H1 (cell line): ENCODE measurements at regions of chr20 and their contacts with region 1.

Region 1: DNA sequence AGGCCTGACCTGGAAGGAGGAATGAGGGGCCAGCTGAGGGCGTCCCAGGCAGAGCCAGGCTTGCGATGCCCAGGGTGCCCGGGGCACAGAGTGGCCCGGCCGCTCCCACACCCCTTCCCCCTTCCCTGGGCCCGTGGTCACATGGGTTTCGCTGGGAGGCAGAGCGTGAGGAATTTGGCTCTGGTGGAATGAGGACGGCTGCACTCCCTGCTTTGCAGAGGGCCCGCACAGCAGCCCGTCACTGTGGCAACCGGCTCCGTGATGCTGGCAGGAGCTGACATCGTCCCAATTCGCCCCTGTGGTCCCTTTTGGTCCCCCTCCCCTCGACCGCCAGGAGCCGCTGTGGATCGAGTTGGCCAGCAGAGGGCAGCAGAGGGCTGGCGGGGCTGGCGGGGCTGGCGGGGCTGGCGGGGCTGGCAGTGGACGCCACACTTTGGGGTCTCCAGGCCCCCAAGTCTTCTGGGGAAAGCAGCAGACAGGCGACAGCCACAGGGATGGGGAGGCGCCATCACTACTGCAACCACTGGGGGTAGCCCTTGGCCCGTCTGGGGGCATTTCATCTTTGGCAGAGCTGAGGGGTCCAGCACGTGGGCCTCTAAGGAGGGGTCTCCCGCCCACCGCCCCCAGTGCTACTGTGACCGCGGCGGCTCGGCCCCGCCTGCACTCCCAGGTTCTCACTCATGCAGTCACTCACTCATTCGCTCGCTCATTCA is 49.6 kb upstream of the BHLHE23 start:
- DNase-seq: peak in 1 of 2 experiments; percentile 93
- H3K4me3 ChIP-seq: peak overlapping the region in 1 of 4 experiments; percentile 41; a peak in 1 of 8 replicates
- H3K27ac ChIP-seq: no peak overlapping the region
- H3K4me1 ChIP-seq: peaks cover 0 to 2% (median 0%) of the 10 kb centered on the region in 4 experiments; a peak in 2 of 7 replicates
- H3K27me3 ChIP-seq: no peaks in the 10 kb centered on the region; a peak in 2 of 7 replicates
- CTCF ChIP-seq: peak; percentile 67 to 94 (median 74)
- EP300 ChIP-seq: no peak
- POLR2A ChIP-seq: no peak
- RAD21 ChIP-seq: peak; percentile 70 to 85

Region 2: GRCh38 chr20:62815066-62815991 is 241.1 kb before region 1 on chr20:
- CTCF ChIA-PET with region 1: no interaction called
- POLR2A ChIA-PET with region 1: no interaction called
- DNase-seq: peak; percentile 54 to 73
- H3K4me3 ChIP-seq: peak overlapping the region; percentile 54 to 71 (median 63)
- H3K27ac ChIP-seq: no peak overlapping the region; the same call in 1 of the 2 replicates
- H3K4me1 ChIP-seq: peaks cover 0 to 17% (median 11%) of the 10 kb centered on the region in 4 experiments; a peak in 5 of 7 replicates
- H3K27me3 ChIP-seq: peaks cover 0 to 8% (median 2%) of the 10 kb centered on the region in 4 experiments; a peak in 2 of 7 replicates
- CTCF ChIP-seq: no peak
- EP300 ChIP-seq: no peak
- POLR2A ChIP-seq: no peak
- RAD21 ChIP-seq: no peak

Region 3: GRCh38 chr20:62986257-62986800 is 70.1 kb before region 1 on chr20:
- CTCF ChIA-PET with region 1: no interaction called
- POLR2A ChIA-PET with region 1: no interaction called
- DNase-seq: no peak
- H3K4me3 ChIP-seq: no peak overlapping the region
- H3K27ac ChIP-seq: no peak overlapping the region
- H3K4me1 ChIP-seq: peaks cover 0 to 19% (median 7%) of the 10 kb centered on the region in 4 experiments; a peak in 5 of 7 replicates
- H3K27me3 ChIP-seq: no peaks in the 10 kb centered on the region
- CTCF ChIP-seq: no peak
- EP300 ChIP-seq: no peak
- POLR2A ChIP-seq: no peak
- RAD21 ChIP-seq: no peak

Region 4: DNA sequence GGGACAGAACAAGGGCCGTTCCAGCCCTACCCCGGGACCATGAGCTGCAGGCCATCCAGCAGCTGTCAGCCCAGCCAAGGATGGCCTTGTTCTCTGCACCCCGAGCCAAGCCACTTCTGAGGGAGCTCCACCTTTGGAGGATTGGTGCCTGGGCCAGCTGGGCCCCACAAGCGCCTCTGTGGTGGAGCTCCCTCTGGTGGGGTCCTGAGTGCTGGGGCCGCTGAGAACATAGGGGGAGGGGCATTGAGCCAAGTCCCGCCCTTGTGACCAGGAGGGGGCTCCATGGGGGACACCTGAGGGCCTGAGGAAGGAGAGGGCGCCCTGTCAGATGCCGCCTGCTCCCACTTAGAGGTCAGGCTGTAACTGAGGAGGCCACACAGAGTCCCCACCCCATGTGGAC is 116.3 kb after region 1 on chr20:
- CTCF ChIA-PET with region 1: interaction called, 21 read pairs
- POLR2A ChIA-PET with region 1: no interaction called
- DNase-seq: peak in 1 of 2 experiments; percentile 82
- H3K4me3 ChIP-seq: no peak overlapping the region
- H3K27ac ChIP-seq: no peak overlapping the region
- H3K4me1 ChIP-seq: peaks cover 3 to 44% (median 25%) of the 10 kb centered on the region in 4 experiments
- H3K27me3 ChIP-seq: peaks cover 30 to 55% (median 44%) of the 10 kb centered on the region in 4 experiments
- CTCF ChIP-seq: peak; percentile 60 to 82 (median 81)
- EP300 ChIP-seq: no peak
- POLR2A ChIP-seq: no peak
- RAD21 ChIP-seq: peak; percentile 68 to 80

Region 5: GRCh38 chr20:63321136-63321831 is 264.9 kb after region 1 on chr20:
- CTCF ChIA-PET with region 1: no interaction called
- POLR2A ChIA-PET with region 1: no interaction called
- DNase-seq: no peak
- H3K4me3 ChIP-seq: no peak overlapping the region
- H3K27ac ChIP-seq: no peak overlapping the region
- H3K4me1 ChIP-seq: no peaks in the 10 kb centered on the region; a peak in 1 of 7 replicates
- H3K27me3 ChIP-seq: no peaks in the 10 kb centered on the region
- CTCF ChIP-seq: no peak
- EP300 ChIP-seq: no peak
- POLR2A ChIP-seq: no peak
- RAD21 ChIP-seq: no peak